ENCODE measurements at regions of chr19 and their contacts with region 1.

Region 1: GRCh38 chr19:4007021-4007835 is at the start of gene PIAS4:
- DNase-seq: peak; percentile 67
- H3K4me3 ChIP-seq: peak within 1 kb of the TSS; percentile 87
- H3K27me3 ChIP-seq: no peaks in the 10 kb centered on the region
- CTCF ChIP-seq: no peak
- polyA plus RNA-seq, gene PIAS4: 10.9 and 18.2 TPM in 2 replicates

Region 2: DNA sequence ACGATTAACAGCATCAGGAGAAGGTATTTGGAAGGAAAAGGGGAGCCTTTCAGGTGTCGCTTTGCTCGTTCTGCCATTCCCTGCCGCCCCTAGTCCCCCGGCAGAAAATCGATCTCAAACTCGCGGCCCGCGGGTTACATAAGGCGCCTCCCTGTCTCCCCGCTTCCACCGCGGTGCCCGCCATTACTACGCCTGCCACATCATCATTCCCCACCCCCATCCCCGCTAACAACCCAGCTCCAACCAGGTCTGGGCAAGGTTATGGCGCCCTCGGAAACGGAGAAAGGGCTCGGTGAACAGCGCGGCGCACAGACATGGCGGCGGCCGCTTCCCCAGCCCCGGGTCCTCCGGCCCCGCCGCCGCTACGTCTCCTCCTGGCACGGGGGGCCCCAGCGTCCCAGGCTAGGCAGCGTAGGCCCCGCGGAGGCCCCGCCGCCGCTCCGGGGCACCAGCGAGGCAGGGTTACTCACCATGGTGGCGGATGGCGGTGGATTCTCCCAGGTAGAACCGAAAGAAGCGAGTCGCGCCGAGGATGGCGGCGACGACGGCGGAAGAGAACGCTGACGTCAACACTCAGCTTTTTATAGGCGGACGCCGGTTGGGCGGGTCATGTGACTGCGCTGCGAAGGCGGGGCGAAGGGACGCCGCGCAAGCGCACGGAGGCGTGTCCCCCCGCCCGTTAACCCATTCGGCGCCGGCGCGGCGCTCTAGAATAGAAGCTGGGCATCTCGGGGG is 22.2 kb before region 1 on chr19 and contains the start of gene EEF2:
- CTCF ChIA-PET with region 1: interaction called, 27 read pairs
- POLR2A ChIA-PET with region 1: interaction called, 7 read pairs
- DNase-seq: no peak
- H3K4me3 ChIP-seq: peak within 1 kb of the TSS; percentile 68
- H3K27me3 ChIP-seq: no peaks in the 10 kb centered on the region
- CTCF ChIP-seq: no peak
- polyA plus RNA-seq, gene EEF2: 1,661 and 2,469 TPM in 2 replicates

Region 3: DNA sequence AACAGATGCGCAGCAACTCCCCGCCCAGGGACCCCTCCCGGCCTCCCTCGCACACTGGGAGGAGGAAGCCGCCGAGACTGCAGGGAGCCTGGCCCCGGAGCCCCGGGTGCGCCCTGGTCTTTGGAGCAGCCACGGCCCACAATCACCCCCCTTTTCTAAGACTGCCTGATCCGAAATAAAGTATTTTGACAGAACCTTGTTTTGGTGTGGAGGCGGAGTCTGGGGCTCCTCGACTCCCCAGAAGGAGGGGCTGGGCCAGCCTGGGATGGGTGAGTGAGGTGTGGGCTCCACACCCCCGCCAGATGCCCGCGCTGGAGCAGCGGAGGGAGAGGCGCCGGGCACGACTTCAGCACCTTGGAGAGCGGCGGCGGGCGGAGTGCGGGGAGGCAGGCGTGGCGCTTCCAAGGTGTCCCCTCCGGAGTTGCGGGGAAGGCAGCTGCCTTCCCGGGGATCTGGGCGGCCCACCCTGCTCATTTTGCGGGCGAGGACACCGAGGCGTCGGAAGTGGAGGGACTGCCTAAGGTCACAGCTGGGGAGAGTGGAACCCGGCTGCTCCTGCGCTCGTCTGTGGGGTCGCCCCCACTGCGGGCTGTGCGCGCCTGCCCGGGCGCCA is 165.7 kb after region 1 on chr19:
- CTCF ChIA-PET with region 1: no interaction called
- POLR2A ChIA-PET with region 1: no interaction called
- DNase-seq: no peak
- H3K4me3 ChIP-seq: no peak overlapping the region
- H3K27me3 ChIP-seq: peaks cover 3% of the 10 kb centered on the region
- CTCF ChIP-seq: no peak

Measured in BJ (cell line).